PC-3 (cell line): ENCODE measurements at regions of chr10 and their contacts with region 1.

Region 1: GRCh38 chr10:122112625-122113160 is 123.7 kb downstream of the TACC2 start:
- DNase-seq: peak; percentile 86
- ATAC-seq: peak; percentile 74
- H3K4me3 ChIP-seq: peak overlapping the region; percentile 87
- H3K27ac ChIP-seq: peak overlapping the region; percentile 99
- H3K4me1 ChIP-seq: peaks cover 32% of the 10 kb centered on the region
- H3K27me3 ChIP-seq: no peaks in the 10 kb centered on the region
- CTCF ChIP-seq: peak; percentile 43; the same call in 1 of the 2 replicates

Region 2: DNA sequence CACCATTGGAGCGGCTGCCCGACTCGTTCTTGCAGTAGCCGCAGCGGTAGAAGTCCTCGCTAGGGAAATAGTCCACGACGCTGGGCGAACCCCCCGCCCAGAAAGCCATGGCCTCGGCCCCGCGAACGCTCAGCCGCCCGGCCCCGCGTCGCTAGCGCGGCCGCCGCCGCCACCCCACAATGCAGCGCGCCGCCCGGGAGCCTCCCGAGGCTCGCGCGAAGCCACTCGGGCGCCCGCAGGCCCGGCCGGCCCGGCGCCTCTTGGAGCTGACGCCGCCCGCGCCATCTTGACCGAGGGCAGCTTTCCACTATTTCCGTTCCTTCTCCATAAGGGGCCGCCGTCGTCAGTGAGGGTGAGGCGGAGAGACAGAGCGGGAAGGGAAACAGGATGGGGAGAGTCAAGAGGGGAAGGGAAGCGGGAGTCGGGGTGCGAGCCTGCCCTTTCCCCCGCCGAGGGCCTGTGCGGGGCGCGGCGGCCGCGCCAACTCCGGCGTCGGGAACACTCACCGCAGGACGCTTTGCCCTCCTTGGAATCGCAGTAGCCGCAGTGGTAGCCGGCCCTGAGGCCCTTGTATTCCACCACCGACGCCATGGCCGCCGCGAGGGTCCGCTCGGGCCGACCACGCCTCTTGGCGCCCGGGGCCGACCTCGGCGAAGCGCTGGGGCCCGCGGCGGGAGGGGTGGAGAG is 184.7 kb before region 1 on chr10 and contains the start of gene ATE1:
- CTCF ChIA-PET with region 1: no interaction called
- POLR2A ChIA-PET with region 1: no interaction called
- intact Hi-C with region 1: loop called (anchors 1 kb)
- DNase-seq: peak; percentile 84
- ATAC-seq: peak; percentile 81
- H3K4me3 ChIP-seq: peak within 1 kb of the TSS; percentile 77
- H3K27ac ChIP-seq: peak within 1 kb of the TSS; percentile 94
- H3K4me1 ChIP-seq: peaks cover 12% of the 10 kb centered on the region
- H3K27me3 ChIP-seq: no peaks in the 10 kb centered on the region
- CTCF ChIP-seq: no peak
- total RNA-seq, gene ATE1: 7.9 and 12.8 TPM in 2 replicates

Region 3: DNA sequence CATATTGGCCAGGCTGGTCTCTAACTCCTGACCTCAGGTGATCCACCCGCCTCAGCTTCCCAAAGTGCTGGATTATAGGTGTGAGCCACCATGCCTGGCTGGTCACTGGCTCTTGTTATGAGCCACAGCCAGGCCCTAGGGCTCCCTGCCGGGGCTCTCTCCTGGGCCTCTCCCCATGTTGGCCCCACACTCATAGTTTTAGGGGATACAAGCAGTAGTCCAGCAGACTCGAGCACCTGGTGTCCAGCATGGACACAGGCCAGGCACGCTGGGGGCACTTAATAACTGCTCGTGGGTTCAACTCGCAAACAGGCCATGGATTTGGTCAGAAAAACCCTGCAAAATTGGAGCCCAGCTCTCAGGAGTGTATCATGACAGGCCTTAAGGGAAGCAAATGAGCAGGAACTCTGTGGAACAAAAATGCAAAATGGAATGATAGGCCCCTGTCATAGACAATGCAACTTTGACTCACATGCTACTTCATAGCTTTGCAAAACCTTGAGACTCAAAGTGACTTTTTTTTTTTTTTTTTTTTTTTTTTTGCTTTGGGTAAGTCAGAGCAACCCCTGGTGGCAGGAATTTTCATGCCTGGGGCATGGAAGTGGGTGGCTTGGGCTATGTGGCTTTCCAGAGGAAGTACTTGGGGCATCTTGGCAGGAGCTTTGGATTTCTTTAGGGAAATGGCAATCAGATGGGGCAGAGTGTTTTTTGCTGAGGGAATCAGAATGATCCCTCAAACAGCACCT is 61.3 kb before region 1 on chr10:
- CTCF ChIA-PET with region 1: interaction called, 8 read pairs
- POLR2A ChIA-PET with region 1: no interaction called
- intact Hi-C with region 1: loop called (anchors 1 kb)
- DNase-seq: peak; percentile 92
- ATAC-seq: peak; percentile 60
- H3K4me3 ChIP-seq: no peak overlapping the region
- H3K27ac ChIP-seq: peak overlapping the region; percentile 92
- H3K4me1 ChIP-seq: peaks cover 36% of the 10 kb centered on the region
- H3K27me3 ChIP-seq: no peaks in the 10 kb centered on the region
- CTCF ChIP-seq: peak; percentile 83

Region 4: DNA sequence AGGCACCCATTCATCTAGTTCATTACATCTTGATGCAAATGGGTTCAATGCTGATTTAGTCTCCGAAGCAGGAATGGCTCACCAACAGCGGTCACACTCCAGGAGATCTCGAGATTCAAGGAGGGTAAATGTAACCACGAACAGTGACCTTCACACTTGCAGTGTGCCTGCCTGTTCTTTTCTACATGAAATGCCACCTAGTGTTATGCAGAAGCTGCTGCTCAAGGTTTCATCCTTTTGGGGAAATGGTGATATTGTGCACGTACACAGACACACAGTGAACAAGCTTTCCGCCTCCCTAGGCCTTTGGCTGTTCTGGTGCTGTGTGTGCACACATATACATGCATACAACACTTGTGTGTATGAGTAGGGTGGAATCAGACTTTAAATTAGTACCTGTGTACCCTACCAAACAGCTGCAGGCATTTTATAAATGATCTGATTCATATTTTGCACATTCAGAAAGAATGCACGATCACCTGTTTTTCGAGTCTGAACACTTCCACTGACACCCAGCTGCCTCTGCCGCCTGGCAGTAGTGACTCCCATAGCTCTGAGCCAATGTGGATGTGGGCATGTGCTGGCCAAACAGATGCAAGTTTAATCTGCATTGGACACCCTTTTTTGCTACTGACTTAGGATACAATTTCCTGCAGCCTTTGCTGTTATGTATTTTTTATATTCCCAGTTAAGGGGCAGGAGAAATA is 23.2 kb before region 1 on chr10:
- CTCF ChIA-PET with region 1: no interaction called
- POLR2A ChIA-PET with region 1: no interaction called
- intact Hi-C with region 1: loop called (anchors 1 kb)
- DNase-seq: peak; percentile 84
- ATAC-seq: peak; percentile 91
- H3K4me3 ChIP-seq: peak overlapping the region; percentile 24; the same call in 1 of the 2 replicates
- H3K27ac ChIP-seq: peak overlapping the region; percentile 72
- H3K4me1 ChIP-seq: peaks cover 16% of the 10 kb centered on the region
- H3K27me3 ChIP-seq: no peaks in the 10 kb centered on the region
- CTCF ChIP-seq: 0 out of 2 replicates have a peak, but pooled peaks have one; percentile 40

Region 5: DNA sequence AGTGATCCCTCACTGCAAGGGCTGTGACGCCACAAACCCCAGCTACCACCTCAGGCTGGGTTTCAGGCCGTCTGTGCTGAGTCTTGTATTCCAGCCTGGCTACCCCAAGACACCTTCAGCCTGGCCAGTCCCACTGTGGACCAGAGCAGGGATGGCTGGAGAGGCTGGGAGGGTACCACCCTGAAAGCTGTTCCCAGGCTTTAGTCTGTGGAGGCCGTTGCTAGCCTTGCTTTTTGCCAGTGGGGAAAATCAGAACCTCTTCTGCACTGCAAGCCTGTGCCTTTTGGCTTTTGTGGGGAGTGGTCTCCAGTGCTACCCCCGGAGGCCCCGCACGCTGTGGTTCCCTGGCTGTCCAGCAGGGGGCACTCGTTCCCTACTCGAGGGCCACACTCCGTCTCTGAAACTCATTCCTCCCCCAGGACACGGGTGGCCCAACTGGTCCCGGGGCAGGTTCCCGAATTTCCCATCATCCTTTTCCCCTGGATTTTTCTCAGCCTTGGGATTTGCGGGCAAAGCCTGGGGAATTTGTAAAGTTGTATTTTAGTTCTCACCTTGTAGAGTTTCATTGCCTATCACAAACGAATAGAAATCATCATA is 30.0 kb after region 1 on chr10:
- CTCF ChIA-PET with region 1: interaction called, 11 read pairs
- POLR2A ChIA-PET with region 1: no interaction called
- intact Hi-C with region 1: loop called (anchors 2 kb)
- DNase-seq: peak; percentile 35
- ATAC-seq: no peak
- H3K4me3 ChIP-seq: peak overlapping the region; percentile 35; the same call in 1 of the 2 replicates
- H3K27ac ChIP-seq: peak overlapping the region; percentile 99
- H3K4me1 ChIP-seq: peaks cover 53% of the 10 kb centered on the region
- H3K27me3 ChIP-seq: no peaks in the 10 kb centered on the region
- CTCF ChIP-seq: peak; percentile 89